BJ (cell line): ENCODE measurements at regions of chr10 and their contacts with region 1.

Region 1: DNA sequence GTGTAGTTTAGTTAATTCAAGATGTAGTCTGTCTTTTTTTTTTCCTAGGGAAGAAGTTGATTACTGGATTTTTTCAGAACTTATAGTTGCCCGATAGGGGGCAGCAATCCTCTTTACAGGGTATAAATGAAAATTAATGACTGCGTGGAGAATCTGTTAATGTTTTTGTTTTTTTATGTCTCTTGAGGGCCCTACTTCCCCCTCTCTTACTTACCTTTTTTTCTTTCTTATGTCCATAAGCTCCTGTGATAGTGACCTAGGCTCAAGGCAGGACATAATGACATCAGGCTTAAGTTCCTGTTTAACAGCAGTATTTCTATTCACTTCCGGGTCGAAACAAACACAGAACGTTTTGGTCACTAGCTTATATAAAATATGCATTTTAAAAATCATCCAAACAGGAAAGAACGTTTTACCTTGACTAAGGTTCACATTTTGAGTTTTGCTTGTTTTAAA is 18.8 kb downstream of the CDC123 start:
- DNase-seq: no peak
- H3K4me3 ChIP-seq: no peak overlapping the region
- H3K27me3 ChIP-seq: no peaks in the 10 kb centered on the region
- CTCF ChIP-seq: peak; percentile 70

Region 2: DNA sequence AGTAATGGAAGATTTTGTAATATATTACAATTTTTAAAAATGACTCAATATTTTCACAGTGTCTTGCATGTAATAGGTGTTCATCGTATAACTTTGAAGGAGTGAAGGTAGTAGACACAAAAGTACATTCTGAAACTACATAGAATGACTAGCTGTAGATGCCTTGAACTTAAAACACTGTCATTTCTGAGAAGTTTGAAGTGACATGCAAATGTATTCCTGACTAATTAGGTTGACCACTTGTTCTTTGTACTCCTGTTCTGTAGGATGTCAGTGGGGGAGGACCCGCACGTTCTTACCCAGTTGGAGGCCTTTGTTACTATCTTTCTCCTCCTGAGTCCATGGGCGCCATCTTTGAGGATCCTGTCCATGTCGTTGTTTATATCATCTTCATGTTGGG is 54.1 kb before region 1 on chr10:
- CTCF ChIA-PET with region 1: no interaction called
- POLR2A ChIA-PET with region 1: no interaction called
- DNase-seq: no peak
- H3K4me3 ChIP-seq: no peak overlapping the region
- H3K27me3 ChIP-seq: no peaks in the 10 kb centered on the region
- CTCF ChIP-seq: no peak

Region 3: GRCh38 chr10:12195603-12196506 is 18.9 kb before region 1 on chr10 and contains the starts of genes CDC123 and NUDT5:
- CTCF ChIA-PET with region 1: interaction called, 56 read pairs
- POLR2A ChIA-PET with region 1: no interaction called
- DNase-seq: peak; percentile 54
- H3K4me3 ChIP-seq: peak within 1 kb of the TSS; percentile 79
- H3K27me3 ChIP-seq: no peaks in the 10 kb centered on the region
- CTCF ChIP-seq: 0 out of 2 replicates have a peak, but pooled peaks have one; percentile 9
- polyA plus RNA-seq, gene CDC123: 122 and 157 TPM in 2 replicates
- polyA plus RNA-seq, gene NUDT5: 68.0 and 89.5 TPM in 2 replicates

Region 4: GRCh38 chr10:12201543-12201942 is 13.2 kb before region 1 on chr10:
- CTCF ChIA-PET with region 1: interaction called, 56 read pairs
- POLR2A ChIA-PET with region 1: no interaction called
- DNase-seq: no peak
- H3K4me3 ChIP-seq: no peak overlapping the region
- H3K27me3 ChIP-seq: no peaks in the 10 kb centered on the region
- CTCF ChIP-seq: no peak

Region 5: GRCh38 chr10:12225444-12225843 is 10.7 kb after region 1 on chr10:
- CTCF ChIA-PET with region 1: interaction called, 25 read pairs
- POLR2A ChIA-PET with region 1: no interaction called
- DNase-seq: no peak
- H3K4me3 ChIP-seq: no peak overlapping the region
- H3K27me3 ChIP-seq: no peaks in the 10 kb centered on the region
- CTCF ChIP-seq: no peak

Region 6: DNA sequence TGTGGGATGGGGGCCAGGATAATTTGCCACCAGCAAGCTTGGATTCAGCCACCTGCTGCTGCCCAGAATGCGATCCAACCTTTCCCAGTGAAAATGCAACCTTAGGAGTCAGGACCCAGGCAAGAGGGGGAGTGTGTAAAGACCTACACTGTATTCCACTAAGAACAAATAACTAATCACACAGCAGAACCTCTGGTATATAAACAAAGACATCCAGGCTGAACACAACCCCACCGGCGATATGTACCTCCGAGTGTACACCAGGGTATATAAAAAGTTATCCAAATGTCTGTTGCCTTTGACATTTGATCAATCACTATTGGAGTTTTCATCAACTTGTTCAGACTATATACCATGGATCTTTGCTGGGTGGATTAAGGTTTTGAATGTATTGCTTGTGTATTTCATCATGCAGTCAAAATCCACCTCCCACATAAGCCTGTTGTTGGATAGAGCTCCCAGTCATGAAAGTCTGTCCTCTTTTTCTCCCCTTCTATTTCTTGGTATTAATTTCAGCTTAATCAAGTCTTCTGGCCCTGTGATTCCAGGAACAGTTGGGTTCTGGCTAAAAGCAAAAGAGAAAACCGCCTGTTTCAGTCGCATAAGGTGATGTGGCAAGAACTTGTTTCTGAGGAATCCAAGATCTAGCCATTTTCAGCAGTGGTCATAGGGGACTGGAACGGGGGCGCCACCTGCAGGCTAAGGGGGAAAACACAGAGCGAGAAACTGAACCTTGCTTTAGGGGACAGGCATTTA is 496.0 kb after region 1 on chr10:
- CTCF ChIA-PET with region 1: interaction called, 30 read pairs
- POLR2A ChIA-PET with region 1: no interaction called
- DNase-seq: peak; percentile 46
- H3K4me3 ChIP-seq: no peak overlapping the region
- H3K27me3 ChIP-seq: no peaks in the 10 kb centered on the region; the same call in none of the 2 replicates
- CTCF ChIP-seq: peak; percentile 96

Region 7: GRCh38 chr10:13074561-13075451 is 860.0 kb after region 1 on chr10:
- CTCF ChIA-PET with region 1: interaction called, 12 read pairs
- POLR2A ChIA-PET with region 1: no interaction called
- DNase-seq: no peak
- H3K4me3 ChIP-seq: no peak overlapping the region
- H3K27me3 ChIP-seq: no peaks in the 10 kb centered on the region
- CTCF ChIP-seq: peak; percentile 93